ENCODE measurements at regions of chr3 and their contacts with region 1.

Region 1: DNA sequence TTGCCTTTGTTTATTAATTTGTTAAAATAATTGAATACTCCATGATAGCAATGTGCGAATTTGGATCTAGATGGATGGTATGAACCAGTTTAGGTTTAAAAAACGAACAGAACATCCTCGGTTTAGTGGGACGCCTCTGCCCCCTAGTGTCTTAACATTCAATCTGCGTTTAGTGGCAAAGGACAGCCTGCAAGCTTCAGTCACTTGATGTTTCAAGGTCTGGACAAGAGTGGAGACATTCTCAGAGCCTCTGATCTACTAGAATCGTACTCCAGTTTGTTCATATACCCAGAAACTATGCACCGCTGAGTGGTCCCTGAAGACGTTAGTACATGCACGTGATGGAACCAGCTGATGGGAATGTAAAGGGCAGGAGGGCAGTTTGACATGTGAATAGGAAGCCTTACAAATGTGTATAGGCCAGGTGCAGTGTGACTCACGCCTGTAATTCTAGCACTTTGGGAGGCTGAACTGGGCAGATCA is 17.8 kb upstream of the ATP13A4 start:
- DNase-seq: peak; percentile 6 to 63 (median 28)
- ATAC-seq: no peak
- H3K4me3 ChIP-seq: no peak overlapping the region
- H3K4me3 Mint-ChIP-seq: no peak overlapping the region
- H3K27ac ChIP-seq: no peak overlapping the region
- H3K27ac Mint-ChIP-seq: no peak overlapping the region
- H3K4me1 ChIP-seq: no peaks in the 10 kb centered on the region
- H3K4me1 Mint-ChIP-seq: no peaks in the 10 kb centered on the region
- H3K27me3 ChIP-seq: no peaks in the 10 kb centered on the region
- H3K27me3 Mint-ChIP-seq: no peaks in the 10 kb centered on the region
- CTCF ChIP-seq: peak; percentile 76

Region 2: DNA sequence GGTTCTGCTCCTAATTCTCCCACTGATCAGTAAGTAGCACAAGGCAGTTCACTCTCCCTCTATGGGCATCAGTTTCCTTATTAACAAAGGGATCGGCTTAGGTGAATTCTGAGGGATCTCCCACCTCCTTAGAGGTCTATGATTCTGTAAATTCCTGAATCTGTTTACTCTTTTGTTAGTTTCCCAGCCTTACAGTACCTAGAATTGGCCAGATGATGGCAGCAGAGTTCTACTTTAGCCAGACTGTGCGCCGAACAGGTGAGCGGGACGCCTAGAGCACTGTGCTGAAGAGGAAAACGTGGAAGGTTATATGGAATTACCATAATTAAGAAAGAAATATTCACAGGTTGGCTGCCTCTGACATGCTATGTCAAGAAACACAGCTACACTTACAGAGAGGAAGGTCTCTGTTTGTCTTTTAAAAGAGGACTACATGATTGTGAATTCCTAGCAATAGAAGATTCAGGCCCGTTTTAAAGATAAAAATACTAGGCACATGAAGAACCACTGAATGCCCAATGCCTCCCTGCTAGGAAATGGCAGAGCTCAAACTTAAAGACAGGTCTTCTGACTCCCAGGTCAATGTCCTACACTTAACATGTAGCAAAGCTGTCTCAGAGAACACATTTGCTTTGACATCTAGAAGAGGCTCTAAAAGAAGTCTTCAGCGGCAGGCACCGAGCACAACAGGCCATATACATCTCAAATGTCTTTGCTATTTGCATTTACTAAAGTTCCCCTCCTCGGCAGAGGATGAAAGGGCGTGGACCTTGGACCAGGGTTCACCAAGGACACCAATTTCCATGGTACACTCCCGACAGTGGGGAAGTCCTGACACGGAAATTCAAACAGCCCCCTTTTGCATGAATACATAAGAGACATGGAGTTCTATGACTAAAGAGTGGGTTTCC is 1105.0 kb before region 1 on chr3:
- CTCF ChIA-PET with region 1: no interaction called
- POLR2A ChIA-PET with region 1: no interaction called
- intact Hi-C with region 1: loop called (anchors 2 to 5 kb)
- DNase-seq: peak; percentile 11 to 64 (median 25)
- ATAC-seq: peak; percentile 79
- H3K4me3 ChIP-seq: no peak overlapping the region
- H3K4me3 Mint-ChIP-seq: no peak overlapping the region
- H3K27ac ChIP-seq: no peak overlapping the region
- H3K27ac Mint-ChIP-seq: no peak overlapping the region
- H3K4me1 ChIP-seq: no peaks in the 10 kb centered on the region
- H3K4me1 Mint-ChIP-seq: no peaks in the 10 kb centered on the region
- H3K27me3 ChIP-seq: peaks cover 0 to 4% of the 10 kb centered on the region in 2 experiments
- H3K27me3 Mint-ChIP-seq: peaks cover 42% of the 10 kb centered on the region
- CTCF ChIP-seq: peak; percentile 77

Region 3: DNA sequence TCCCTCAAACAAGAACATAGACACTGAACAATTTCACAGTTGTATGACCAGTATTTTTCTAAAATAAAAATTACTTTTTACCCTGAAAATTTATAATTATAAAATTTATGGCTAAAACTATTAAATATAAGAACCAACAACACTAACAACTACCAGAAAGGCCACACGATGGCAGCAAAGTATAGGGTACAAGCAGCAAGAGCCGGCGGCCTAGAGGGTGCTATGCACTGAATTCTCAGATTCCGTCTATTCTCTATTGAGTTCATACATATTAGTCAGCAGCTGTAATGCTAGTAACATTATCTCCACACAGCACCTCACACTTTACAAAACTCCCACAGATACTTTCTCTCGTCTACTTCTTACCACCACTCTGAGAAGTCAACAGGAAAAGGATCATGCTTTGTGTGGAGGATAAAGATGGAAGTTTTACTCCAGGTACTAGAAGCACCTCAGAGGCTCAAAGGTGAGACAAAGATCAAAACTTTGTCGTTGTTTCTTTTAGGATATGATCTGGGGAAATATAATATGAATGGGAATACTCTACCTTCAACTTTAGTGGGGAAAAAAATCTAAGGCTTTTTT is 1005.7 kb before region 1 on chr3:
- CTCF ChIA-PET with region 1: no interaction called
- POLR2A ChIA-PET with region 1: no interaction called
- intact Hi-C with region 1: loop called in 1 of 2 experiments (anchors 10 kb)
- DNase-seq: peak; percentile 17 to 68 (median 41)
- ATAC-seq: no peak
- H3K4me3 ChIP-seq: no peak overlapping the region
- H3K4me3 Mint-ChIP-seq: no peak overlapping the region
- H3K27ac ChIP-seq: no peak overlapping the region
- H3K27ac Mint-ChIP-seq: no peak overlapping the region
- H3K4me1 ChIP-seq: peaks cover 2% of the 10 kb centered on the region
- H3K4me1 Mint-ChIP-seq: no peaks in the 10 kb centered on the region
- H3K27me3 ChIP-seq: peaks cover 0 to 12% of the 10 kb centered on the region in 2 experiments
- H3K27me3 Mint-ChIP-seq: peaks cover 30% of the 10 kb centered on the region
- CTCF ChIP-seq: peak; percentile 46

Region 4: GRCh38 chr3:192816351-192816750 is 756.1 kb before region 1 on chr3:
- CTCF ChIA-PET with region 1: no interaction called
- POLR2A ChIA-PET with region 1: no interaction called
- intact Hi-C with region 1: loop called (anchors 5 kb)
- DNase-seq: peak in 3 of 14 experiments; percentile 46 to 57 (median 55)
- ATAC-seq: no peak
- H3K4me3 ChIP-seq: no peak overlapping the region
- H3K4me3 Mint-ChIP-seq: no peak overlapping the region
- H3K27ac ChIP-seq: no peak overlapping the region
- H3K27ac Mint-ChIP-seq: no peak overlapping the region
- H3K4me1 ChIP-seq: peaks cover 12% of the 10 kb centered on the region
- H3K4me1 Mint-ChIP-seq: no peaks in the 10 kb centered on the region
- H3K27me3 ChIP-seq: no peaks in the 10 kb centered on the region
- H3K27me3 Mint-ChIP-seq: peaks cover 14% of the 10 kb centered on the region
- CTCF ChIP-seq: peak; percentile 40

Region 5: DNA sequence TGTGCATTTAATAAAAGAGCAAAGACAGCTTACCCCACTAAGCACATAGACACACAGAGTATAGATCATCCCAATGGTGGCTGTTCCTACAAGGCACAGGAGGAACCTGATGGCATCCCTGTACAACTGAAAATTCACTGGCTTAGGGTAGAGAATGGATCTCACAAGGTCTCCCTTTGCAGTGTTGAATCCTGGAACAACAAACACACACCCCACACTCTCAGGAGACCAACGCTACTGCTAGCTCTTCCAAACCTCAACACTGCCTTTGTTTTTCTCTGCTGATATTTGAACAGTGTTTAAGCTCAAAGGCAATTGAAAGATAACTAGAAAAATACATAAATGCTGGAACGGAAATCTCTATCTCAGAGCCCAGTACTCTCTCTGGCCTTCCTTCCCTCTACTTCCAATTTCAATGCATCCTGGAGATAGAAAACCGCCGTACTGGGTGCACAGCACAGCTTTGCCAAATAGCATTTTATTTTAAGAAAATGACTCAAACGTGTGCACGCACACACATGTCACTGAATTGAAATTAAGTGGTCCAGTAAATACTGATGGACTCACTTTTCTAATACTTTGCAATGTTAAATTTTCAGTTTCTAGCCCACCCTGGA is 106.4 kb before region 1 on chr3:
- CTCF ChIA-PET with region 1: no interaction called
- POLR2A ChIA-PET with region 1: no interaction called
- intact Hi-C with region 1: loop called in 1 of 2 experiments (anchors 2 kb)
- DNase-seq: no peak
- ATAC-seq: no peak
- H3K4me3 ChIP-seq: no peak overlapping the region
- H3K4me3 Mint-ChIP-seq: no peak overlapping the region
- H3K27ac ChIP-seq: no peak overlapping the region
- H3K27ac Mint-ChIP-seq: no peak overlapping the region
- H3K4me1 ChIP-seq: no peaks in the 10 kb centered on the region
- H3K4me1 Mint-ChIP-seq: no peaks in the 10 kb centered on the region
- H3K27me3 ChIP-seq: no peaks in the 10 kb centered on the region
- H3K27me3 Mint-ChIP-seq: no peaks in the 10 kb centered on the region
- CTCF ChIP-seq: no peak

Region 6: DNA sequence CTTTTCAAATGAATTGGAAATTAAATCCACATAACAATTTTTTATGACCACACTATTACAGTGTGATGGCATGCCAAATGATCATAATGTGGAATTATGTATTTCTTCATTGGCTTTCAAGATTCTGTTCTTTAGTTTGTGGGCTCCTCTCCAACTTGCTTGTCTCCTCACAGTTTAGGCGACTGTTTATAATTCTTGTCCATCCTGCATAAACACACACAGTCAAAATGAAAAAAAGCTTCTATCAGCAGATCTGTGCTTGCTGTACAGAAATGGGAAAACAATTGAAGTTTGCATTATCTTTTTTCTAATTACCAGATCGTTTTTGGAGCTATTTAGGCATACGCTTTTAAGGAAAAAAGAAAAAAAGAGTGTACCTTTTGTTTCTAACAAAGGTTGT is 57.5 kb after region 1 on chr3:
- CTCF ChIA-PET with region 1: no interaction called
- POLR2A ChIA-PET with region 1: no interaction called
- intact Hi-C with region 1: no loop called
- DNase-seq: no peak
- ATAC-seq: no peak
- H3K4me3 ChIP-seq: no peak overlapping the region
- H3K4me3 Mint-ChIP-seq: no peak overlapping the region
- H3K27ac ChIP-seq: no peak overlapping the region
- H3K27ac Mint-ChIP-seq: no peak overlapping the region
- H3K4me1 ChIP-seq: no peaks in the 10 kb centered on the region
- H3K4me1 Mint-ChIP-seq: no peaks in the 10 kb centered on the region
- H3K27me3 ChIP-seq: no peaks in the 10 kb centered on the region
- H3K27me3 Mint-ChIP-seq: no peaks in the 10 kb centered on the region
- CTCF ChIP-seq: no peak